ENCODE measurements at regions of chr6 and their contacts with region 1.

Region 1: DNA sequence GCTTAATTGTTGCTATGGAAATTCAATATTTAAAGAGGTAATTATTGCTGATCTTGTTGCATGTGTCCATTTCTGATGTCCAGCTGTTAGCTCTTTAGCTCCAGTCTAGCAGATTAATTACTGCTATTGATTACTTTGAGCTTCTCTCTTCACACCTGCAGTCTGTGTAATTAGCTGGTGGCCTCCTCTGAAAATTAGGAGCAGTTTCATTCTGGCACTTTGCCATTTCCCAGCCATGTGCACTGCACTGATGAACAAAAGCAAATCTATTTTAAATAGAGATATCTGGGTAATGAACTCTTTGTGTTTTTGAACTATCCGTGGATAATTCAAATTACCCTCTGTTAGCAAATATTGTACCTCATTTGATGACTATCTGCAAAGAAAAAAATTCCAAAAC is 275.9 kb downstream of the RNF144B start:
- DNase-seq: no peak
- ATAC-seq: no peak
- H3K4me3 ChIP-seq: no peak overlapping the region
- H3K27ac ChIP-seq: no peak overlapping the region
- H3K4me1 ChIP-seq: no peaks in the 10 kb centered on the region
- H3K27me3 ChIP-seq: no peaks in the 10 kb centered on the region
- CTCF ChIP-seq: no peak
- POLR2A ChIP-seq: no peak
- RAD21 ChIP-seq: no peak

Region 2: DNA sequence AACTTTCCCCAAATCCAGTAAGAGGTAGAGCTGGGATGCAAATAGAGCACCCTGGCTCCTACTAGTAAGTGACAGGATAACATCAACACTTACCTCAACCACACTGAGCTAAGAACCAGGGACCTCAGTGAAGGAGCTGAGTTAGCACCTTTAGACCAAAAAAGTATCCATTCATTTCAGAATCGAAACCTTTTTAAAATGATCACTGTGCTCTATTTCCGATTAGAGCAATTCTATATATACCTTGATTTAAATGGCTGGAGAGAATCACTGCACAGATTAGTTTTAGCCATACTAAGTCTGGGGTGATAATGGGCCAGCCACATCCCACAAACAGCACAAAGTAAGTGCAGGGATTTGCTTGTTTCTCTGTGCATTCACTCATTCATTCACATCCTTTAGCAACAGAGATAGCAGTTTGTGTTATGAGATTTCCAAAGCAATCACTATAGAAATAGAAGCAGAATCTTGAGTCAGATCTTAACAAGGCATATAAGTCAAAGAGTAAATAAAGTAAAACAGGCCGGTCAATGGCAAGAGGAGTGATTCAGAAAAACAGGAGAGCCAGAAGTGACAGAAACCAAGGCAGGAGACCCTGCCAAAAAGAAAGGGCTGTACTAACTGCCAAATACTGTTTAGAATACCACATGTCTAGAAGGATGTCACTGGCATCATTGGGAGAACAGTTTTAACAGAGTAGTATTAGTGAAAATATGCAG is 811.9 kb before region 1 on chr6:
- CTCF ChIA-PET with region 1: no interaction called
- POLR2A ChIA-PET with region 1: no interaction called
- RAD21 ChIA-PET with region 1: no interaction called
- intact Hi-C with region 1: no loop called
- DNase-seq: no peak
- ATAC-seq: no peak
- H3K4me3 ChIP-seq: no peak overlapping the region
- H3K27ac ChIP-seq: no peak overlapping the region
- H3K4me1 ChIP-seq: no peaks in the 10 kb centered on the region
- H3K27me3 ChIP-seq: no peaks in the 10 kb centered on the region
- CTCF ChIP-seq: no peak
- POLR2A ChIP-seq: no peak
- RAD21 ChIP-seq: no peak

Region 3: GRCh38 chr6:17865798-17866725 is 796.9 kb before region 1 on chr6:
- CTCF ChIA-PET with region 1: no interaction called
- POLR2A ChIA-PET with region 1: no interaction called
- RAD21 ChIA-PET with region 1: no interaction called
- intact Hi-C with region 1: no loop called
- DNase-seq: peak; percentile 98
- ATAC-seq: peak; percentile 87
- H3K4me3 ChIP-seq: peak overlapping the region in 1 of 2 experiments; percentile 24; a peak in 2 of 4 replicates
- H3K27ac ChIP-seq: peak overlapping the region; percentile 85
- H3K4me1 ChIP-seq: peaks cover 40 to 52% of the 10 kb centered on the region in 2 experiments
- H3K27me3 ChIP-seq: no peaks in the 10 kb centered on the region
- CTCF ChIP-seq: no peak
- POLR2A ChIP-seq: no peak
- RAD21 ChIP-seq: peak; percentile 30; the same call in 1 of the 2 replicates

Region 4: GRCh38 chr6:18724056-18724455 is 61.0 kb after region 1 on chr6:
- CTCF ChIA-PET with region 1: no interaction called
- POLR2A ChIA-PET with region 1: no interaction called
- RAD21 ChIA-PET with region 1: no interaction called
- intact Hi-C with region 1: loop called (anchors 2 kb)
- DNase-seq: no peak
- ATAC-seq: no peak
- H3K4me3 ChIP-seq: no peak overlapping the region
- H3K27ac ChIP-seq: no peak overlapping the region
- H3K4me1 ChIP-seq: no peaks in the 10 kb centered on the region
- H3K27me3 ChIP-seq: no peaks in the 10 kb centered on the region
- CTCF ChIP-seq: no peak
- POLR2A ChIP-seq: no peak
- RAD21 ChIP-seq: no peak

Region 5: DNA sequence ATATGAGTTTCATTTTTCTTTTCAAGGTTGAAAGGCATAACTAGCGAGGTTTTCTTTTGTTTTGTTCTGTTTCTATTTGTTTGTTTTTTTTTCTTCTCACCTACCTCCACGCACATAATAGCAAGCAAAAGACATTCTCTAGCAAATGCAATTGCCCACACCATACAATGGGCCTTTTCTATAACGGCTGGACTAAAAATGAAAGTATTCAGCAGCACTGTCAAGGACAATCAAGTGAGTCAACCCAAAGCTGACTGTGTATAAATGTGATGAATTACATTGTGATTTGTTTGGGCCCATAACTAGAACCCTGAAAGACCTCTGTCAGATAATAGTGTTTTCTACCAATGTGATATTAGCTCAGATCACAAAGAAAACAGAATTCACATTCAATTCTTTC is 220.8 kb after region 1 on chr6:
- CTCF ChIA-PET with region 1: no interaction called
- POLR2A ChIA-PET with region 1: no interaction called
- RAD21 ChIA-PET with region 1: no interaction called
- intact Hi-C with region 1: no loop called
- DNase-seq: no peak
- ATAC-seq: no peak
- H3K4me3 ChIP-seq: no peak overlapping the region
- H3K27ac ChIP-seq: no peak overlapping the region
- H3K4me1 ChIP-seq: no peaks in the 10 kb centered on the region
- H3K27me3 ChIP-seq: no peaks in the 10 kb centered on the region
- CTCF ChIP-seq: no peak
- POLR2A ChIP-seq: no peak
- RAD21 ChIP-seq: no peak

Region 6: DNA sequence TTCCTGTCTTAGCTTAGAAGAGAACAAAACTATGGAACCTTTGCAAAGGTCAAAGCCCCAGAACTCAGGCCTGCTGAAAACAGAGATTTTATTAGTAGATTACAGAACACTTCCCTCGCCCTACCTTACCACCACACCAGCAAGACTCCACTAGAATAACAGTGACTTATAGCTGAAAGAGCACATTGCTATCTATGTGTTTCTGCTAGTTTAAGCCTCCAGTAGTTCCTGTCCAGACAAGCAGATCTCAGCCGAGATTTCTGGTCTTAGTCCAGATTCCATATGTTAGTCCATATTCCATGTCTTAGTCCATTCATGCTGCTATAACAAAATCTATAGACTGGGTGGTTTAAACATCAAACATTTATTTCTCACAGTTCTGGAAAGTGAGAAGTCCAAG is 761.8 kb after region 1 on chr6:
- CTCF ChIA-PET with region 1: no interaction called
- POLR2A ChIA-PET with region 1: no interaction called
- RAD21 ChIA-PET with region 1: no interaction called
- intact Hi-C with region 1: no loop called
- DNase-seq: no peak
- ATAC-seq: no peak
- H3K4me3 ChIP-seq: no peak overlapping the region
- H3K27ac ChIP-seq: no peak overlapping the region
- H3K4me1 ChIP-seq: no peaks in the 10 kb centered on the region
- H3K27me3 ChIP-seq: no peaks in the 10 kb centered on the region
- CTCF ChIP-seq: no peak
- POLR2A ChIP-seq: no peak
- RAD21 ChIP-seq: no peak

Measured in HCT116 (cell line).